H1 (cell line): ENCODE measurements at regions of chr1 and their contacts with region 1.

Region 1: DNA sequence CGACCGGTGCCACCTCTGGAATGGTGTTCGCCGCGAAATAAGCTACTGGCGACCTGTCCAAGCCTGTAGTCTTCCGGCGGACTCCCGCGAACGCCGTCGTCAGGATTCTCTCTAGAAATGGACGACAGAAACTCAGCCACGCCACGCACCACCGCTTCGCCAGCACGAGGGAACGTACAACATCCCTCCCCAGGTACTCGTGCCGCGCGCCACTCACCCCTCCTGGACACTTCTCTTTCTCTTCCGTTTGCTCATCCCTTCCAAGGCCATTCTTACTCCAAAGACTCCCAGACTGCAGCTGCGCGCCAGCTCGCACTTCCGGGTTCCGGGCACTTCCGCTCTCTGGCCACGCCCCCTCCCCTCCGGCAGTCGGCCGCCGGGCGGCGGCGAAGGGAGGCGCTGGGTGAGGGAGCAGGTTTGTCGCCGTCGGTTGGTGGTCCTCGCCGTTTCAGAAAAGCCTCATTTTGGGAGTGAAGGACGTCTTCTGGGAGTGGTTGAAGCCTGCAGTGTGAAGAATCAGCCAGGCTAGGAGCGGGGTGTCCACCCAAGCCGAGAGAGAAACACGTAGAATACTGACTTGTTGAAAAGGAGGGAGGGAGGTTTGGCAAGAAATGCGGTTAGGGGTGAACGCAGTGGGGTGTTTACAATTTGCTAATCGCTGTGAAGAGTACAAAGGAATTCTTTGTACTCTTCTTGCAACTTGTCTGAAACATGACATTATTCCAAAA is at the start of gene RBM34:
- DNase-seq: peak; percentile 62 to 96
- H3K4me3 ChIP-seq: peak within 1 kb of the TSS; percentile 81 to 99 (median 94)
- H3K27ac ChIP-seq: peak within 1 kb of the TSS; percentile 82
- H3K4me1 ChIP-seq: peaks cover 0 to 4% (median 1%) of the 10 kb centered on the region in 4 experiments; a peak in 4 of 7 replicates
- H3K27me3 ChIP-seq: no peaks in the 10 kb centered on the region
- CTCF ChIP-seq: peak in 2 of 3 experiments; percentile 1 to 21; a peak in 2 of 4 replicates
- EP300 ChIP-seq: no peak
- POLR2A ChIP-seq: peak; percentile 94 to 96
- RAD21 ChIP-seq: no peak
- total RNA-seq, gene RBM34: 108 and 115 TPM in 2 replicates

Region 2: DNA sequence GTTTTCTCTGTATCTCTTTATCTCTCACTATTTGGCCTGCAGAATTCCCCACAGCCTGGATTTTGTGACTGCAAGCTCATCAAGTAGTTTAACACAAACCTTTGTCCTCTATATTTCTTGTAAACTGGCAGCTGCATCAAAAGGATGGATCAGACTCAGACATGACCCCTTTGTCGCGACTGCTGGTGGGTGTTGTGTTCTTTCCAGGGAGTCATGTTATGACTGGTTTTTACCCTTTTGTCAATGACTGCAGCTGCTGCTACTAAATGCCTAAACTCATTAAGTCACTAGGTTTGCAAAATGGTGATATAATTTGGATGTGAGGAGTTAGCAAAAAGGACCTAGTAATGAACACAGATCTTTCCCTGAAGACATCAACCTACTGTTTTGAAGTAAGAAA is 22.3 kb before region 1 on chr1:
- CTCF ChIA-PET with region 1: interaction called, 7 read pairs
- POLR2A ChIA-PET with region 1: interaction called, 14 read pairs
- DNase-seq: peak in 1 of 2 experiments; percentile 16
- H3K4me3 ChIP-seq: no peak overlapping the region
- H3K27ac ChIP-seq: no peak overlapping the region
- H3K4me1 ChIP-seq: no peaks in the 10 kb centered on the region
- H3K27me3 ChIP-seq: no peaks in the 10 kb centered on the region
- CTCF ChIP-seq: no peak
- EP300 ChIP-seq: no peak
- POLR2A ChIP-seq: no peak
- RAD21 ChIP-seq: no peak

Region 3: GRCh38 chr1:235147269-235147668 is 13.9 kb before region 1 on chr1:
- CTCF ChIA-PET with region 1: interaction called, 7 read pairs
- POLR2A ChIA-PET with region 1: interaction called, 18 read pairs
- DNase-seq: peak in 1 of 2 experiments; percentile 3
- H3K4me3 ChIP-seq: no peak overlapping the region
- H3K27ac ChIP-seq: no peak overlapping the region
- H3K4me1 ChIP-seq: no peaks in the 10 kb centered on the region
- H3K27me3 ChIP-seq: no peaks in the 10 kb centered on the region
- CTCF ChIP-seq: no peak
- EP300 ChIP-seq: no peak
- POLR2A ChIP-seq: no peak
- RAD21 ChIP-seq: no peak

Region 4: GRCh38 chr1:235250430-235250829 is 89.3 kb after region 1 on chr1:
- CTCF ChIA-PET with region 1: no interaction called
- POLR2A ChIA-PET with region 1: no interaction called
- DNase-seq: no peak
- H3K4me3 ChIP-seq: no peak overlapping the region
- H3K27ac ChIP-seq: no peak overlapping the region
- H3K4me1 ChIP-seq: no peaks in the 10 kb centered on the region
- H3K27me3 ChIP-seq: no peaks in the 10 kb centered on the region
- CTCF ChIP-seq: no peak
- EP300 ChIP-seq: no peak
- POLR2A ChIP-seq: no peak
- RAD21 ChIP-seq: no peak